MCF 10A (cell line): ENCODE measurements at regions of chr17 and their contacts with region 1.

Region 1: GRCh38 chr17:28726226-28727130 is at the start of gene TLCD1:
- DNase-seq: peak; percentile 97
- H3K4me3 Mint-ChIP-seq: peak within 1 kb of the TSS; percentile 91
- H3K27ac Mint-ChIP-seq: peak within 1 kb of the TSS; percentile 99
- H3K4me1 Mint-ChIP-seq: peaks cover 27% of the 10 kb centered on the region
- H3K27me3 Mint-ChIP-seq: no peaks in the 10 kb centered on the region
- CTCF ChIP-seq: peak; percentile 99
- total RNA-seq, gene TLCD1: 13.4 and 18.7 TPM in 2 replicates

Region 2: DNA sequence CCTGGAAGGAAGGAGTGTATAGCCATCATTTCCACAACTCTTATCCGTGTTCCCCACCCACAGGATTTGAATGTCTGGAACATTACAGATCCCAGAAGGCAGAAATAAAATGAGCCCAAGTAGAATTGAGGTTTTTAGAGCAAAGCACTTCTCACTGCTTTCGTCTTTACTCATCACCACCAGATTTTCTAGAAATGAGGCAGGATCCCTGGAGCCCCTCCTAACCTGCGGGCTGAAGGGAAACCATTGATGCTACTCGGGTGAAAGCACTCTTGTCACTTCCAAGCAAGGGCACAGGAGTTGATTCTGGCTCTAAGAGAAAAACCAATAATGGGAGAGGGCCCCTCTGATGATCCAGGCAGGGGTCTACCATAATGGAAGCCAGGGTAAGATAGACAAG is 147.0 kb before region 1 on chr17:
- CTCF ChIA-PET with region 1: no interaction called
- POLR2A ChIA-PET with region 1: no interaction called
- intact Hi-C with region 1: no loop called
- DNase-seq: no peak
- H3K4me3 Mint-ChIP-seq: no peak overlapping the region
- H3K27ac Mint-ChIP-seq: no peak overlapping the region
- H3K4me1 Mint-ChIP-seq: peaks cover 10% of the 10 kb centered on the region
- H3K27me3 Mint-ChIP-seq: no peaks in the 10 kb centered on the region
- CTCF ChIP-seq: no peak

Region 3: GRCh38 chr17:28661635-28662537 is 64.6 kb before region 1 on chr17 and contains the starts of genes SDF2 and SUPT6H:
- CTCF ChIA-PET with region 1: no interaction called
- POLR2A ChIA-PET with region 1: interaction called, 72 read pairs
- intact Hi-C with region 1: no loop called
- DNase-seq: peak; percentile 86
- H3K4me3 Mint-ChIP-seq: peak within 1 kb of the TSS; percentile 88
- H3K27ac Mint-ChIP-seq: peak within 1 kb of the TSS; percentile 96
- H3K4me1 Mint-ChIP-seq: peaks cover 46% of the 10 kb centered on the region
- H3K27me3 Mint-ChIP-seq: no peaks in the 10 kb centered on the region
- CTCF ChIP-seq: no peak
- total RNA-seq, gene SDF2: 31.4 and 31.8 TPM in 2 replicates
- total RNA-seq, gene SUPT6H: 81.7 and 86.4 TPM in 2 replicates

Region 4: GRCh38 chr17:28763804-28764266 is 37.4 kb after region 1 on chr17:
- CTCF ChIA-PET with region 1: interaction called, 21 read pairs
- POLR2A ChIA-PET with region 1: interaction called, 22 read pairs
- intact Hi-C with region 1: no loop called
- DNase-seq: peak; percentile 83
- H3K4me3 Mint-ChIP-seq: no peak overlapping the region
- H3K27ac Mint-ChIP-seq: peak overlapping the region; percentile 16
- H3K4me1 Mint-ChIP-seq: peaks cover 10% of the 10 kb centered on the region
- H3K27me3 Mint-ChIP-seq: no peaks in the 10 kb centered on the region
- CTCF ChIP-seq: peak; percentile 70

Region 5: GRCh38 chr17:28878981-28879380 is 152.5 kb after region 1 on chr17:
- CTCF ChIA-PET with region 1: interaction called, 8 read pairs
- POLR2A ChIA-PET with region 1: interaction called, 4 read pairs
- intact Hi-C with region 1: loop called (anchors 1 kb)
- DNase-seq: peak; percentile 66
- H3K4me3 Mint-ChIP-seq: no peak overlapping the region
- H3K27ac Mint-ChIP-seq: no peak overlapping the region
- H3K4me1 Mint-ChIP-seq: peaks cover 19% of the 10 kb centered on the region
- H3K27me3 Mint-ChIP-seq: no peaks in the 10 kb centered on the region
- CTCF ChIP-seq: peak; percentile 45

Region 6: DNA sequence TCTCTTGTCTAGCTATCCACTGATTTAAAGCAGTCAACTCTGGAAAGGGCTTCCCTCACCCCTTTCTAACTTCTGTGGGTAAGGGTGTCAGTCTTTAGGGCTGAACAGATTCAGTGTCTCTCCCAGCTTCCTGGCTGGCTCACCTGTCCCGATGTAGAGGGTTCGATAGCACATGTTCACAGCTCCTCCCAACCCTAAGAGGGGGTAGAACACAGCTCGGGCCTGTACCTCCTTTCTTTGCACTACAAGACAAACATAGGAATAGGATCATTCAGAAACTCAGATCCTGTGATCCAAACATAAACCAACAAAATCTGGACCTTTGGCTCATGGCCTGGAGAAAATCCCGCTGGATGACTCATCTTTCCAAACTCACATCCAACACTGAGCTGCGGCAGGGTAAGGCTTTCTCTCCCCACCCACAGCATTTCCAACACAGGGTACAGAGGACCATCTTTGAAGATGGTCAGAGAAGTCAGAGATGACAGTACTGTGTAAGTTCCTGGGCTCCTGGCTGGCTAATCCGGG is 182.2 kb after region 1 on chr17:
- CTCF ChIA-PET with region 1: interaction called, 6 read pairs
- POLR2A ChIA-PET with region 1: interaction called, 15 read pairs
- intact Hi-C with region 1: loop called (anchors 2 kb)
- DNase-seq: peak; percentile 68
- H3K4me3 Mint-ChIP-seq: no peak overlapping the region
- H3K27ac Mint-ChIP-seq: peak overlapping the region; percentile 75
- H3K4me1 Mint-ChIP-seq: peaks cover 17% of the 10 kb centered on the region
- H3K27me3 Mint-ChIP-seq: no peaks in the 10 kb centered on the region
- CTCF ChIP-seq: no peak

Region 7: DNA sequence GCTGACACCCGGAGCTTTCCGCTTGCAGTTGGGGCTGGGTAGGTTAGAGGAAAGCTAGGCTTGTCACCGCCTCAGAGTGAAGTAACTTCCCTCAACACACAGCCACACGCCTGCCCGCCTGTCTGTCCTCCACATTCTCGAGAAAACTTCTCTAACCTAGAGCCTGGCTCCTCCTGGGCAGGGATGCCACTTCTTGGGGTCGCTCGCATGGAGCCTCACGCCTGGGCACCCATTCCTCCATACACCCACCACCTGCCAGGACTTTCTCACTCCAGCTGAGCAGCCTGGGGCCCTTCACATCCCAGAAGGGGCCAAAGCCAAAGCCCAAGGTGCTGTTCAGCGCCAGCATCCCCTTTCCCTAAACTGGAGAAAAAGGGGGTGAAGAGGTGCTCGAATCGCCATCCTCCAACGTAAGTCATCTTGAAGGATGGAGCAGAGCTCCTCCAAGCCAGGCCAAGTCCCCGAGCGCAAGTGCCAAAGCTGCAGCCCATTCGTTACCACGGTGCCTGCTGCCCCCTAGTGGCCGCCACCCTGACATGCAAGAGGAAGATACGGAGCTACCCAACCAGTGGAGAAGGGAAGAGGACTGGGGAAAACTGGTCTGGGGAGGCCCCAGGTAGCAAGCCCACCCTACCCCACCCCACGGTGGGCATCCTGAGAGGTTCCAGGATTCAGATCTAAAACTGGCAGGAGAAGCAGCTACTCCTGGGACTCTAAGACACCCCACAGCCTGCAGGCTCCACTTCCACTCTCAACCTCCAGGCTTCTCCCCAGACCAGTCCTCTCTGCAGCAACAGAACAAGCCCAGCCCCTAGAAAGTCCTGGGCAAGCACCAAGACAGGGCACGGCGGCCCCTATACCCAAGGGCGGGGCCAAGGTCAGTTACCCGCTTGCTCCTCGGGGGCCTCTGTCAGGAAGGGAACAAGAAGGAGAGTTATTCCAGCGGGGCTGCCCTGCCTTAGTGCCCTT is 390.6 kb after region 1 on chr17:
- CTCF ChIA-PET with region 1: interaction called, 11 read pairs
- POLR2A ChIA-PET with region 1: interaction called, 5 read pairs
- intact Hi-C with region 1: no loop called
- DNase-seq: peak; percentile 68
- H3K4me3 Mint-ChIP-seq: no peak overlapping the region
- H3K27ac Mint-ChIP-seq: no peak overlapping the region
- H3K4me1 Mint-ChIP-seq: no peaks in the 10 kb centered on the region
- H3K27me3 Mint-ChIP-seq: no peaks in the 10 kb centered on the region
- CTCF ChIP-seq: peak; percentile 90